GM12878 (cell line): ENCODE measurements at regions of chr17 and their contacts with region 1.

Region 1: DNA sequence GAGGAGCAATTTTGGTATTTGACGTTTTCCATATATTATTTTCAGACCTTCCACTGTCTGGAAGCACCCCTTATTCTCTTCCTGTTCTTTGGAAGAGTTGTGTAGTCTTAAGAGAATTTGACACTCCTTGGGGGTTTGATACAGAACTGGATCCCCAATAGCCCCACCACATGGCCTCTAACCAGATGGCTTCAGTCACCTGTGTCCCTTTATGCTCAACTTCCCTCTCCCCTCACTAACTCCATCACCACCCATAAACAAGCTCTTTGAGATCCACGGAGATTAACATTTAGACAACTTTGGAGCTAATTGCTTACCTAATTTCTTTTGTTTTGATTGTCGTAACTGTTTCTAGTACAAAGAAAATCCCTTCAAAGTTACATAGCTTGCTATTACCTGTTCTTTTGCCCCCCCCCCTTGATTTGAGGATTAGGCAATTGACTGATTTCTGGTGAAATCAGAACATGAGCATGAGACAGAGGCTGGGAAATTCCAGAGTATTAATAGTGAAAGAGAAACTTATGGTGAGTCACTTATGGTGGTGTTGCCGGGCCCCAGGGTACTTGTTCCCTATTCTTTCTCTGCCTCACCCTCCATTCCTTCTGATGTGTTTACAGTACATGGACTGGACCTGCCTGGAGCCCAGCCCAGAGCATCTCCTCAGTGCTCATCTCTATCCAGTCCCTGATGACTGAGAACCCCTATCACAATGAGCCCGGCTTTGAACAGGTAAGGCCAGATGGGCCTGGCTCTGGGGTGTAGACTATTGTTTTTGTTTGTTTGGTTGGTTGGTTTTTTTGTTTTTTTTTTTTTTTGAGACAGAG is 7.5 kb downstream of the UBE2Z start:
- DNase-seq: peak; percentile 74
- ATAC-seq: peak; percentile 86
- H3K4me3 ChIP-seq: peak overlapping the region; percentile 43
- H3K27ac ChIP-seq: peak overlapping the region; percentile 93
- H3K4me1 ChIP-seq: peaks cover 33% of the 10 kb centered on the region
- H3K27me3 ChIP-seq: no peaks in the 10 kb centered on the region
- CTCF ChIP-seq: no peak
- EP300 ChIP-seq: peak; percentile 57 to 84; a peak in 2 of 4 replicates
- POLR2A ChIP-seq: no peak
- RAD21 ChIP-seq: no peak

Region 2: GRCh38 chr17:48836004-48836403 is 79.7 kb before region 1 on chr17:
- CTCF ChIA-PET with region 1: no interaction called
- POLR2A ChIA-PET with region 1: interaction called, 5 read pairs
- RAD21 ChIA-PET with region 1: interaction called, 10 read pairs
- SMC1A ChIA-PET with region 1: interaction called, 3 read pairs
- in situ Hi-C with region 1: no loop called
- intact Hi-C with region 1: no loop called
- DNase-seq: no peak
- ATAC-seq: peak; percentile 53
- H3K4me3 ChIP-seq: peak overlapping the region; percentile 46; the same call in 1 of the 2 replicates
- H3K27ac ChIP-seq: peak overlapping the region; percentile 53; the same call in 1 of the 2 replicates
- H3K4me1 ChIP-seq: peaks cover 53% of the 10 kb centered on the region
- H3K27me3 ChIP-seq: no peaks in the 10 kb centered on the region
- CTCF ChIP-seq: no peak
- EP300 ChIP-seq: no peak
- POLR2A ChIP-seq: no peak
- RAD21 ChIP-seq: no peak

Region 3: GRCh38 chr17:48944519-48945260 is 29.0 kb after region 1 on chr17 and contains the start of gene SNF8:
- CTCF ChIA-PET with region 1: interaction called, 3 read pairs
- POLR2A ChIA-PET with region 1: interaction called, 11 read pairs
- RAD21 ChIA-PET with region 1: no interaction called
- SMC1A ChIA-PET with region 1: interaction called, 8 read pairs
- in situ Hi-C with region 1: no loop called
- intact Hi-C with region 1: loop called (anchors 2 kb)
- DNase-seq: peak; percentile 51
- ATAC-seq: peak; percentile 97
- H3K4me3 ChIP-seq: peak within 1 kb of the TSS; percentile 99
- H3K27ac ChIP-seq: peak within 1 kb of the TSS; percentile 96
- H3K4me1 ChIP-seq: peaks cover 5% of the 10 kb centered on the region
- H3K27me3 ChIP-seq: no peaks in the 10 kb centered on the region
- CTCF ChIP-seq: no peak
- EP300 ChIP-seq: no peak
- POLR2A ChIP-seq: peak; percentile 95
- RAD21 ChIP-seq: no peak
- polyA plus RNA-seq, gene SNF8: 6.1 to 18.1 TPM

Region 4: DNA sequence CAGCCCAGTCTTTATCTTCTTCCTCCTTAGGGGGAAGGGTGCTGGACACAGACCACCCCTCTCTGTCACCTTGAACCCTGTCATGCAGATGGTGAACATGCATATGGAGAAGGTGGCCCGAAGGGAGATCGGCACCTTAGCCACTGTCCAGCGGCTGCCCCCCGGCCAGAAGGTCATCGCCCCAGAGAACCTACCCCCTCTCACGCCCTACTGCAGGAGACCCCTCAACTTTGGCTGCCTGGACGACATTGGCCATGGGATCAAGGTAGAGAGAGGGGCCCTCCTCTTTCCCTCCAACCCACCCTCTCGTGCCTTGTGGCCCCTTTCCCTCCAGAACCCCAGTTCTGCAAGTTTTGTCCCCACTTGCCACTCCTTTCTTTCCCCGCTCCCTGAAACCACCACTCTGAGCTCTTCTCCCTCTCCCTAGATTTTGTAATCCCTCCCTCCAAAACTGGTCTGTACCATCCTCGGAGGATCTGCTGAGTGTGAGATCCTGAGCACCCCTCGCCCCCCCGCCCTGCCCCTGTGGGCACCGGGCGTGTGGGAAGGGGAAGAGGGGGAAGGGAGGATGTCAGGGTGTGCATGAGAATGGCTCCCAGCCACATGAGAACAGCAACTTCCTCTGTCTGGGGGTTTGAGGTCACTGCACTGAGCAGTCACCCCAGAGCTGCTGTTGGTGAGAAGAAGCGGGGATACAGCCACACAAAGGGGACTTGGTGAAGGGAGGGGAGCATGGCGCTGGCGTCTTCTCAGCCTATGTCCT is 302.2 kb after region 1 on chr17:
- CTCF ChIA-PET with region 1: no interaction called
- POLR2A ChIA-PET with region 1: no interaction called
- RAD21 ChIA-PET with region 1: interaction called, 3 read pairs
- SMC1A ChIA-PET with region 1: no interaction called
- in situ Hi-C with region 1: no loop called
- intact Hi-C with region 1: loop called (anchors 5 kb)
- DNase-seq: peak; percentile 93
- ATAC-seq: peak; percentile 68
- H3K4me3 ChIP-seq: no peak overlapping the region; the same call in 1 of the 2 replicates
- H3K27ac ChIP-seq: peak overlapping the region; percentile 77
- H3K4me1 ChIP-seq: peaks cover 64% of the 10 kb centered on the region
- H3K27me3 ChIP-seq: no peaks in the 10 kb centered on the region
- CTCF ChIP-seq: no peak
- EP300 ChIP-seq: peak; percentile 32 to 84; a peak in 2 of 4 replicates
- POLR2A ChIP-seq: peak; percentile 68
- RAD21 ChIP-seq: peak; percentile 23; the same call in 1 of the 2 replicates